Adrenal gland (tissue), 19 donors: ENCODE measurements at regions of chr2 and their contacts with region 1.

Region 1: GRCh38 chr2:96145036-96145847 is at the start of gene DUSP2:
- DNase-seq: peak; percentile 66 to 81 (median 71)
- H3K4me3 ChIP-seq: peak within 1 kb of the TSS in 2 of 4 donors; percentile 32 to 66
- H3K27ac ChIP-seq: peak within 1 kb of the TSS in 4 of 5 donors; percentile 10 to 61 (median 37)
- H3K4me1 ChIP-seq: peaks cover 16 to 27% of the 10 kb centered on the region in 2 donors
- H3K27me3 ChIP-seq: no peaks in the 10 kb centered on the region
- CTCF ChIP-seq: peak in 1 of 6 experiments; percentile 23
- POLR2A ChIP-seq: peak; percentile 50 to 70
- total RNA-seq, gene DUSP2: 0.72 to 4.7 (median 2.0) TPM

Region 2: DNA sequence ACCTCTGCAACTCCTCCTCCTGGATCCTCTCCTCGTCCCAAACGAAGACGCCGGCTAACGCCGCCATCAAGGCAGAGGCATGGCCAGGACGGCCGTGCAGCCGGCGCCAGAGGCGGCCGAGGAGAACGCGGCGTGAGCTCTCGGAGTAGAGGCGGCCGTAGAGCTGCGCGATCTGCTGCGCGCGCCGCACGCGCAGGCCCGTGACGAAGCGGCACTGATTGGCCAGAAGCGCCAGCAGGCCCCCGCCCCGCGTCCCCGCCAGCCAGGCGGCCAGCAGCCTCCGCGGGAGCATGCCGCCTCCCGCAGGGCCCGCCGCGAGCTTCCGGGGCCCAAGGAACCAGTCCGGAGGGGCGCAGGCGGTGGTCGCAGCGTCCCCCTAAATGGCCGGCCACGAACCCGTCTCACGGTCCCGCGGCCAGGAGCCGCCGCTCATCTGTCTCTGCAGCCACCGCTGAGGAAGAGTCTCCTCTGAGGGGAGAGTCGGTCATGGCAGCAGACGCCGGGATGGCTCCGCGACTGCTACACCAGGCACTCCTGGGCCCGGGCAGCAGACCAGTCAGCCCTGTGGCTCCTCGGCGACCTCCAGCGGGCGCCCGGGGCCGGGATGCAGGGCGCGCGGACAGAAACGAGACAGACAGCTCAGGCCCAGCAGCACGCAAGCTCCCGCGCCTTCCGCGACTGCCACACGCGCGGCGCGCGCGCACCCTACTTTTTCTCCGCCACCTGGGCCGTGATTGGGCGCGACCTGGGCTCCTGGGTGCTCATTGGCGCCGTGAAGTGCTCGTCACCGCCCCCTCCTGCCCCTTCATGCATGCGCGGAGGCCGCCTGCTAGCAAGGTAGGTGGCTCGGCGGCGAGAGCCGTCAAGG is 63.1 kb after region 1 on chr2 and contains the start of gene STARD7:
- intact Hi-C with region 1: no loop called
- DNase-seq: peak; percentile 99 to 100 (median 99)
- H3K4me3 ChIP-seq: peak within 1 kb of the TSS; percentile 35 to 78 (median 70)
- H3K27ac ChIP-seq: peak within 1 kb of the TSS; percentile 89 to 97 (median 97)
- H3K4me1 ChIP-seq: peaks cover 40 to 51% of the 10 kb centered on the region in 2 donors
- H3K27me3 ChIP-seq: no peaks in the 10 kb centered on the region
- CTCF ChIP-seq: peak in 3 of 6 experiments; percentile 11 to 16 (median 13)
- POLR2A ChIP-seq: peak; percentile 90 to 97
- total RNA-seq, gene STARD7: 135 to 209 (median 166) TPM

Region 3: GRCh38 chr2:96265840-96266679 is 120.8 kb after region 1 on chr2 and contains the starts of genes CIAO1 and TMEM127:
- intact Hi-C with region 1: loop called in 1 of 2 experiments (anchors 10 kb)
- DNase-seq: peak; percentile 99
- H3K4me3 ChIP-seq: peak within 1 kb of the TSS; percentile 36 to 97 (median 80)
- H3K27ac ChIP-seq: peak within 1 kb of the TSS; percentile 48 to 99 (median 94)
- H3K4me1 ChIP-seq: peaks cover 25 to 47% of the 10 kb centered on the region in 2 donors
- H3K27me3 ChIP-seq: no peaks in the 10 kb centered on the region
- CTCF ChIP-seq: peak in 5 of 6 experiments; percentile 12 to 59 (median 48)
- POLR2A ChIP-seq: peak; percentile 66 to 89
- total RNA-seq, gene CIAO1: 92.5 to 237 (median 135) TPM
- total RNA-seq, gene TMEM127: 24.3 to 89.2 (median 66.7) TPM